ENCODE measurements at regions of chr3 and their contacts with region 1.

Region 1: DNA sequence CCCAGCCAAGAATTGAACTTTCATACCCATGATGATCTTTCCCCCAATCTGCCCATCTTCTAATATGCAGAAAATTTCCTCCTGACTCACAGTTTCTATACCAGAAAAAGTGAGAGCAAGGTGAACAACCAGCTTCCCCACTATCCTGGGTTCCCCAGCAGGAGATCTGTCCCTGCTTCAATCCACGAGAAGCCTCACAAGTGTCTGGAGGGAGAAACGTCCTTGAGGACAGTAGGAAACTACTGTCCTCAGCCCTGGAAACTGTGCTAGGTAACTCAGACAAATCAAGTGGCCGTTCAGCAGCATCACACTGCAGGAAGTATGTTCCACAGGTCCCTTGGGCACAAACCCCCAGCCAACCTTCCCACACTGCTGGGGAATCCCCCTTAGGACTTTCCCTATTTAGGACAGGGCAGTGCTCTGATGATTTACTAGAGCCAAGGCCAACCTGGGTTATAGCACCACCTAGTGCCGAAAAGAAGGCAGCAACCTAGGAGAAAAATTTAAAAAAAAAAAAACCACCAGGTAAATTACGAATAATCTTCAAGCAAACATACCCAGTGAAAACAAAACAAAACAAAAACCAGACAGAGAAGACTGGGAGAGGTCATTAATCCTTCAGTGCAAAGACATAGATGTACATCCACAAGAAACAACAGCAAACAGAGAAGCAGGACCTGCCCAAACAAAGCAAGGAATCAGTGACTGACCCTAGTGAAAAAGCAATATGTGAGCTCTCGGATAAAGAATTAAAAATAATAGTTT is 36.0 kb downstream of the MORC1 start:
- DNase-seq: peak; percentile 46
- ATAC-seq: peak; percentile 47
- H3K4me3 Mint-ChIP-seq: no peak overlapping the region
- H3K27ac Mint-ChIP-seq: no peak overlapping the region
- H3K4me1 Mint-ChIP-seq: no peaks in the 10 kb centered on the region
- H3K27me3 Mint-ChIP-seq: peaks cover 13% of the 10 kb centered on the region

Region 2: GRCh38 chr3:108662130-108662738 is 419.7 kb before region 1 on chr3:
- CTCF ChIA-PET with region 1: no interaction called
- POLR2A ChIA-PET with region 1: no interaction called
- intact Hi-C with region 1: loop called (anchors 1 to 5 kb)
- DNase-seq: peak; percentile 63
- ATAC-seq: peak; percentile 69
- H3K4me3 Mint-ChIP-seq: no peak overlapping the region
- H3K27ac Mint-ChIP-seq: peak overlapping the region; percentile 6
- H3K4me1 Mint-ChIP-seq: peaks cover 15% of the 10 kb centered on the region
- H3K27me3 Mint-ChIP-seq: no peaks in the 10 kb centered on the region

Region 3: DNA sequence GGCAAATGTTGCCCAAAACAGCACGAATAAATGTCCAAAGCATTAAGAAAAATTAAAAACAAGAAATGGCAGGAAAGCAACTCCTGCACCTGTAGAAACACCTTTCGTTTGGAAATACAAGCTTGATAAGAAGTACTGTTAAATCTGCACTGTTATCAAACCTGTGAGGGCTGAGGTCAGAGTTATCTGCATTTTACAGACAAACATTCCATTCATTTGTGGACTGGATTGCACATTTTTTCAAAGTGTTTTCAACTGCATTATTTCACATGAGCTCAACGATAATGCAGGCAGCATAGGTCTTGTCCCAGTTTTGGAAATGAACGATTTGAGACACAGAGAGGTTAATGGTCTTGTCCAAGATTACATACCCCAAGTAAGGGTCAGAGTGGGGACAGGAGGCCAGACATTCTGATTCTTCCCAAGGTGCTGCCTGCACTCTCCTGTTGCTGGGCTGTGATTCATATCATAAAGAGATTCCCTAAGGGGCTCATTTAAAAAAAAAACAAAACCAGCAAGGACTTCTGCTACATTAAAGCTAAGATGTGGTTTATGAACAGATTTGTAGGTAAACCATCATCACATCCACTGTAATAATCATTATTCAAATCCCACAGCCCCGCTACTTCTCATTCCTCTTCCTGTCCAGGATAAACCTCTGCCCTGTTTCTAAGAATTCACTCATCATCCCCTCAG is 141.2 kb before region 1 on chr3:
- CTCF ChIA-PET with region 1: no interaction called
- POLR2A ChIA-PET with region 1: no interaction called
- intact Hi-C with region 1: no loop called
- DNase-seq: no peak
- ATAC-seq: no peak
- H3K4me3 Mint-ChIP-seq: no peak overlapping the region
- H3K27ac Mint-ChIP-seq: no peak overlapping the region
- H3K4me1 Mint-ChIP-seq: no peaks in the 10 kb centered on the region
- H3K27me3 Mint-ChIP-seq: peaks cover 2% of the 10 kb centered on the region

Region 4: DNA sequence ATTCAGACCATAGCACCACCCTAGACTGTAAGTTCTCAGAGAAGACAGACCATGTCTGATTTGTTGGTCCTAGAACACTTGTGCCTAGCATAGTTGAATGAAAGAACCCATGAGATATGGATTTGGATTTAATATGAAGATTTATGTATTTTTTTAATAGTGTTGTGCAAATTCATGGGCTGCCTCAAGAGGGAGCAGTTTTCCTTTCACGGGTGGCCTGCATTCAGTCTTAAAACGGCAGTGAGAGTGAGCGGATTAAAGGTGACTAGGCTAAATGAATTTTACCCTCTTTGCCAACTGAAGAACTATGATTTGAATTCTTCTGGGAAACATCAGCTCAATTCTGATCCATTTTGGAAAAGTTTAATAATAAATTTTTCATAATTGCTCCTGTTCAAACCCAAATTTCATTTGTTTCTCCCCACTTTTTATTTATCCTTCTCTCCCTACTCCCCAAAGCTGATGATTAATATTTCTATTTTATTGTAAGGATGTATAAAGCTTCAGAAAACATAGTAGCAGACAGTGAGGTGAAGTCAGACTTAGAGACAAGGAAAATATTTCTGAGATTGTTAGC is 31.2 kb before region 1 on chr3:
- CTCF ChIA-PET with region 1: no interaction called
- POLR2A ChIA-PET with region 1: no interaction called
- intact Hi-C with region 1: loop called in 1 of 2 experiments (anchors 2 kb)
- DNase-seq: peak; percentile 46
- ATAC-seq: no peak
- H3K4me3 Mint-ChIP-seq: no peak overlapping the region
- H3K27ac Mint-ChIP-seq: no peak overlapping the region
- H3K4me1 Mint-ChIP-seq: no peaks in the 10 kb centered on the region
- H3K27me3 Mint-ChIP-seq: no peaks in the 10 kb centered on the region

Measured in activated CD4-positive, alpha-beta T cell treated with anti-CD3 and anti-CD28 coated beads for 36 hours (primary cell).